ENCODE measurements at regions of chr9 and their contacts with region 1.

Region 1: DNA sequence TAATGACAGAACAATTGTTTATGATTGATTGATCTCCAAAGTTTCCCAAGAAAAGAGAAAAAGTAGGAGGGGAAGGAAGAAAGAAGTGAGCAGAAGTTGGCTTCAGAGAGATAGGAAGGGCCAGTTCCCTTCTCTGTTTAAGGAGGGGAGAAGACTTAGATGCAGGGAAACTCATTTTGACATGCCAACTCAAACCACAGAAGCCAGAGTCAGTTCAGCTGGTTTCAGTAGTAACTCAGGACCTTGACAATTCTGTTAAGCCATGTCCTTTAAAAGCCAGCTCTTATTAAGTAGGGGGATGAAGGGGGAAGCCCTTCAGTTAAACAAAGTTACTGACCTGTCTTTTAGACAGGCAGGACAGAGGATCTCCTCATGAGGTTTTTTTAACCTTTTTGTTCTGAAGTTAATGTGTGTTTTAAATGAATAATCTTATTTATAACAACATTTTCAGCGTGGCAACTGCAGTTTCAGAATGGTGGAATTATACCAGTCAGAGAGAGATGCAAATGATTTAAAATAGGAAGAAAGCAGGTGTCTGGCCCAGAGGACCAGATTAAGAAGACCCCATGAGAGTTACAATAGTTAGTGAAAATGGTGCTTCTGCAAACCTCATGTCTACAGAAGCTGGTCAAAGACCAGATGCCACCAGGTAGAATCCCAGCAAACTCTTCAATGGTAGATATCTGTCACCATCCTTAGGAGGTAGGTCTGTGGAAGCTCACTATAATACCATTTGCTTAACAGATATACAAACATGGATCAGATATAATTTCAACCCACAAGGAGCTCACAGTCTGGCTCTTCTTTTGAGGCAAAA is 29.3 kb upstream of the ABL1 start:
- DNase-seq: no peak
- ATAC-seq: peak in 1 of 3 donors; percentile 5
- H3K4me3 ChIP-seq: no peak overlapping the region
- H3K4me3 Mint-ChIP-seq: no peak overlapping the region
- H3K27ac ChIP-seq: no peak overlapping the region
- H3K27ac Mint-ChIP-seq: peak overlapping the region; percentile 64 to 82
- H3K4me1 ChIP-seq: peaks cover 10% of the 10 kb centered on the region
- H3K4me1 Mint-ChIP-seq: peaks cover 22 to 24% of the 10 kb centered on the region in 2 donors
- H3K27me3 ChIP-seq: no peaks in the 10 kb centered on the region
- H3K27me3 Mint-ChIP-seq: no peaks in the 10 kb centered on the region
- CTCF ChIP-seq: no peak

Region 2: GRCh38 chr9:130834371-130835311 is 28.9 kb after region 1 on chr9 and contains the start of gene ABL1:
- intact Hi-C with region 1: loop called (anchors 1 kb)
- DNase-seq: peak; percentile 78 to 83
- ATAC-seq: peak; percentile 83 to 92 (median 91)
- H3K4me3 ChIP-seq: peak within 1 kb of the TSS; percentile 64
- H3K4me3 Mint-ChIP-seq: peak within 1 kb of the TSS; percentile 96
- H3K27ac ChIP-seq: peak within 1 kb of the TSS; percentile 81
- H3K27ac Mint-ChIP-seq: peak within 1 kb of the TSS; percentile 84 to 92
- H3K4me1 ChIP-seq: peaks cover 20% of the 10 kb centered on the region
- H3K4me1 Mint-ChIP-seq: peaks cover 41 to 59% of the 10 kb centered on the region in 2 donors
- H3K27me3 ChIP-seq: no peaks in the 10 kb centered on the region
- H3K27me3 Mint-ChIP-seq: no peaks in the 10 kb centered on the region
- CTCF ChIP-seq: no peak
- total RNA-seq, gene ABL1: 49.7 to 65.6 (median 53.8) TPM

Measured in natural killer cell (primary cell).